Cardiac septum (tissue), 1 donor: ENCODE measurements at regions of chr19 and their contacts with region 1.

Region 1: GRCh38 chr19:36169084-36169760 is 17.0 kb upstream of the COX7A1 start:
- DNase-seq: no peak

Region 2: GRCh38 chr19:36054119-36054732 is 115.0 kb before region 1 on chr19 and contains the start of gene THAP8:
- intact Hi-C with region 1: loop called (anchors 5 kb)
- DNase-seq: peak; percentile 100
- total RNA-seq, gene THAP8: 3.9 TPM

Region 3: GRCh38 chr19:36114763-36115452 is 54.3 kb before region 1 on chr19 and contains the start of gene POLR2I:
- intact Hi-C with region 1: no loop called
- DNase-seq: peak; percentile 99
- total RNA-seq, gene POLR2I: 98.7 TPM

Region 4: GRCh38 chr19:36132489-36132891 is 36.7 kb before region 1 on chr19:
- intact Hi-C with region 1: loop called (anchors 1 kb)
- DNase-seq: no peak

Region 5: DNA sequence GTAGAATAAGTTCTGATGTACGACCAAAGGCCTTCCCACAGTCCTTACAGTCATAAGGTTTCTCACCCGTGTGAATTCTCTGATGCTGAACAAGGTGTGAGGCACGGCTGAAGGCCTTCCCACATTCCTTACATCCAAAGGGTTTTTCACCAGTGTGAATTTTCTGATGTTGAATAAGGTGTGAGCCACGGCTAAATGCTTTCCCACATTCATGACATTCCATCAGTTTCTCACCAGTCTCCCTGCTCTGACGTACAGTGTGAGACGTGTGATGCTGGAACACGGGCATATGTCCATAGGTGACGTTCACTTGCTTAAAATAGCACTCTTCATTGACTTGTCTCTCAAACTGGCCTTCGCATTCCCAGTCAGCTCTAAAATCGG is 14.0 kb after region 1 on chr19:
- intact Hi-C with region 1: no loop called
- DNase-seq: no peak